ENCODE measurements at regions of chr2 and their contacts with region 1.

Region 1: GRCh38 chr2:240615820-240616547 is 9.3 kb upstream of the GPR35 start:
- DNase-seq: no peak
- H3K4me3 ChIP-seq: no peak overlapping the region
- H3K4me3 Mint-ChIP-seq: no peak overlapping the region
- H3K27ac Mint-ChIP-seq: no peak overlapping the region
- H3K4me1 ChIP-seq: no peaks in the 10 kb centered on the region
- H3K4me1 Mint-ChIP-seq: no peaks in the 10 kb centered on the region
- H3K27me3 ChIP-seq: no peaks in the 10 kb centered on the region
- H3K27me3 Mint-ChIP-seq: no peaks in the 10 kb centered on the region
- CTCF ChIP-seq: no peak

Region 2: GRCh38 chr2:240225660-240226475 is 390.1 kb before region 1 on chr2:
- CTCF ChIA-PET with region 1: no interaction called
- POLR2A ChIA-PET with region 1: no interaction called
- intact Hi-C with region 1: no loop called
- DNase-seq: no peak
- H3K4me3 ChIP-seq: no peak overlapping the region
- H3K4me3 Mint-ChIP-seq: no peak overlapping the region
- H3K27ac Mint-ChIP-seq: no peak overlapping the region
- H3K4me1 ChIP-seq: no peaks in the 10 kb centered on the region
- H3K4me1 Mint-ChIP-seq: no peaks in the 10 kb centered on the region
- H3K27me3 ChIP-seq: no peaks in the 10 kb centered on the region
- H3K27me3 Mint-ChIP-seq: peaks cover 3% of the 10 kb centered on the region
- CTCF ChIP-seq: no peak

Region 3: GRCh38 chr2:240604291-240604938 is 11.6 kb before region 1 on chr2:
- CTCF ChIA-PET with region 1: interaction called, 12 read pairs
- POLR2A ChIA-PET with region 1: interaction called, 3 read pairs
- intact Hi-C with region 1: no loop called
- DNase-seq: peak; percentile 82 to 88
- H3K4me3 ChIP-seq: peak overlapping the region; percentile 77
- H3K4me3 Mint-ChIP-seq: peak overlapping the region; percentile 78
- H3K27ac Mint-ChIP-seq: peak overlapping the region; percentile 79
- H3K4me1 ChIP-seq: no peaks in the 10 kb centered on the region
- H3K4me1 Mint-ChIP-seq: peaks cover 8% of the 10 kb centered on the region
- H3K27me3 ChIP-seq: no peaks in the 10 kb centered on the region
- H3K27me3 Mint-ChIP-seq: no peaks in the 10 kb centered on the region
- CTCF ChIP-seq: peak; percentile 42 to 72

Region 4: GRCh38 chr2:240796543-240797499 is 180.8 kb after region 1 on chr2:
- CTCF ChIA-PET with region 1: no interaction called
- POLR2A ChIA-PET with region 1: no interaction called
- intact Hi-C with region 1: no loop called
- DNase-seq: peak in 1 of 2 experiments; percentile 13
- H3K4me3 ChIP-seq: no peak overlapping the region
- H3K4me3 Mint-ChIP-seq: no peak overlapping the region
- H3K27ac Mint-ChIP-seq: no peak overlapping the region
- H3K4me1 ChIP-seq: no peaks in the 10 kb centered on the region
- H3K4me1 Mint-ChIP-seq: no peaks in the 10 kb centered on the region
- H3K27me3 ChIP-seq: no peaks in the 10 kb centered on the region
- H3K27me3 Mint-ChIP-seq: no peaks in the 10 kb centered on the region
- CTCF ChIP-seq: no peak